PC-3 (cell line): ENCODE measurements at regions of chr19 and their contacts with region 1.

Region 1: DNA sequence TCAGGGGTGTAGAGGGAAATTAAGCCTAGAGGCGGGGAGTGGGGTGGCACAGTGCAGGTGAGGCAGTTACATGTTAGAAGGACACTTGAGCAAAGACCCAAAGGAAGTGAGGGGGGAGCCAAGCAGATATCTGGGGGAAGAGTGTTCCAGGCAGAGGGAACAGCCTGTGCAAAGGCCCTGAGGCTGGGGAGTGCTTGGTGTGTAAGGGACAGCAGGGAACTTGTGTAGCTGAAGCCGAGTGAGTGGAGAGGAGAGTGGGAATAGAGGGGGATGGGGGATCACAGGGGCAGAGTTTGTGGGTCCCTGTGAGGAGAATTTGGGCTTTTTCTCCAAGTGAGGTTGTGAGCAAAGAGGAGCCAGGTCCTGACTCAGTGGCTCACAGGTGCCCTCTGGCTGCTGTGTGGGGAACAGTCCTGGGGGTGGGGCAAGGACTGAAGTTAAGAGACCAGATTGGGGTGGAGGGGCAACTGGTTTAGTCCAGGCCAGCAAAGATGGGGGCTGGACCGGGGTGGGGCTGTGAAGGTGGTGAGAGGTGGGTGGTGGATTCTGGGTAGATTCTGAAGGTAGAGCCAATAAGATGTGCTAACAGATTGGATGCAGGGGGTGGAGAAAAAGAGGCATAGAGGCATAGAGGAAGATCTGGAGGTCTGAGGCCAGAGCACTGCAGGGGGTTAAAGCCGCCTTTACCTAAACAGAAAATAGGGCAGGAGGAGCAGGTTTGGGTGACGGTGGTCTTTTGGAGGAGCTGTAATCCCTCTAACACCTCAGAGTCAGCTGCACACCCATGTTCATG is 75.3 kb downstream of the CACNA1A start:
- DNase-seq: peak; percentile 83
- ATAC-seq: peak; percentile 72
- H3K4me3 ChIP-seq: no peak overlapping the region
- H3K27ac ChIP-seq: no peak overlapping the region
- H3K4me1 ChIP-seq: peaks cover 9% of the 10 kb centered on the region; the same call in 1 of the 2 replicates
- H3K27me3 ChIP-seq: no peaks in the 10 kb centered on the region
- CTCF ChIP-seq: peak; percentile 97

Region 2: DNA sequence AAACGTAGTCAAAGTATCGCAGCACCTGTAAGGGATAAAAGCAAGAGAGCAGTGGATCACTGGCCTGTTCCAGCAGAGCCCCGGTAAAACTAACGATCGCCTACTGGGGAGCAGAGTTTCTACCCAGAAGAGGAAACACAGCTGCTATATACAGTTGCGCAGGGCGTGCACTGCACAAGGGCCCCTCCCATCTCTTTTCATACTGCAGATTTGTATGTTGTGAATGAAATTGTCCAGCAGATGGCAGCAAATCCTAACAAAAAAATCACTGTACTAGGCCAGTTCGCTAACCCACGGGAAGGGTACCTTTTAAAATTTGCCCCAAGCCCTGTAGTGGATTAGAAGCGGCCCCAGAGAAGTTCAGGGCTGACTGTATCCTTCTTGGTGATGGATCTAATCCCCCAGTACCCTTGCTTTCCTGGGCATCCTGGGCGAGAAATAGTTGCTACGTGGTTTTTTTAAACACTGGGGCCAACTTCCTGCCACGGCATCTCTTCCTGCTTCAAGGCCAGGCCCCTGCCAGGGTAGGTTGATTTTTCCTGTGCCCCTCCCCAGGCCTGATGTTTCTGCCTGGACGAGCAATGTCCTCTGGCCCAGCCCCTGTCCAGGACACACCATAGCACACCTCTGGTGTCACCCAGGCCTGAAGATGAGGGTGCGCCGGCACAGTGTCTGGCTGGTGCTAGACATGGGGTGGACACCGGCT is 153.7 kb before region 1 on chr19:
- CTCF ChIA-PET with region 1: interaction called, 10 read pairs
- POLR2A ChIA-PET with region 1: no interaction called
- intact Hi-C with region 1: loop called (anchors 1 kb)
- DNase-seq: peak; percentile 96
- ATAC-seq: peak; percentile 97
- H3K4me3 ChIP-seq: peak overlapping the region; percentile 37; the same call in 1 of the 2 replicates
- H3K27ac ChIP-seq: no peak overlapping the region
- H3K4me1 ChIP-seq: no peaks in the 10 kb centered on the region
- H3K27me3 ChIP-seq: 0 out of 2 replicates have a peak, but pooled peaks cover 1% of the 10 kb centered on the region
- CTCF ChIP-seq: peak; percentile 86

Region 3: DNA sequence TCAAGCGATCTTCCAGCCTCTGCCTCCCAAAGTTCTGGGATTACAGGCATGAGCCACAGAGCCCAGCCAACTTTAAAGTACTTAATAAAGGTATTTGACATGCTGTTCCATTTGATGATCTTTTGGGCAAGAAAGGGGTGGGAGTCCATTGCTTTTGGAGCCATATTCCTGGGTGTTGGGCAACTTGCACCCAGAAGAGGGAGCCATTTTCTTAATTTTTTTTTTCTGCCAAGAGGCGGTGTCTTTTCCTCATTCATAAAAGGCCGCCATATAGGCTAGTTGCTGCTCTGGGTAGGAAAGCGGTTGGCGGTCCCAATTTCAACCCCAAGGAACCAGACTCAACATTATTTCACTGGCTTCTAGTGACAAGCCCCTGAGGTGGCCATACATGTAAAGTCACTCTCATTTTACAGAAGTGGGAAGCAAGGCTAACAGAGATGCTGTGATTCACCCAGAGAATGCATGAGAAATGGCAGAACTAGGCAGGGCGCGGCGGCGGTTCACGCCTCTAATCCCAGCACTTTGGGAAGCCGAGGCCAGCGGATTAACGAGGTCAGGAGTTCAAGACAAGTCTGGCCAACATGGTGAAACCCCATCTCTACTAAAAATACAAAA is 64.3 kb before region 1 on chr19:
- CTCF ChIA-PET with region 1: interaction called, 4 read pairs
- POLR2A ChIA-PET with region 1: no interaction called
- intact Hi-C with region 1: loop called (anchors 1 kb)
- DNase-seq: peak; percentile 81
- ATAC-seq: peak; percentile 56
- H3K4me3 ChIP-seq: no peak overlapping the region
- H3K27ac ChIP-seq: no peak overlapping the region
- H3K4me1 ChIP-seq: no peaks in the 10 kb centered on the region
- H3K27me3 ChIP-seq: peaks cover 10% of the 10 kb centered on the region
- CTCF ChIP-seq: peak; percentile 93

Region 4: GRCh38 chr19:13398780-13399726 is 31.9 kb before region 1 on chr19:
- CTCF ChIA-PET with region 1: interaction called, 17 read pairs
- POLR2A ChIA-PET with region 1: no interaction called
- intact Hi-C with region 1: loop called (anchors 2 kb)
- DNase-seq: peak; percentile 99
- ATAC-seq: peak; percentile 94
- H3K4me3 ChIP-seq: peak overlapping the region; percentile 40; the same call in 1 of the 2 replicates
- H3K27ac ChIP-seq: peak overlapping the region; percentile 94
- H3K4me1 ChIP-seq: peaks cover 37% of the 10 kb centered on the region
- H3K27me3 ChIP-seq: no peaks in the 10 kb centered on the region
- CTCF ChIP-seq: no peak

Region 5: GRCh38 chr19:13476071-13476470 is 45.1 kb after region 1 on chr19:
- CTCF ChIA-PET with region 1: no interaction called
- POLR2A ChIA-PET with region 1: no interaction called
- intact Hi-C with region 1: no loop called
- DNase-seq: no peak
- ATAC-seq: no peak
- H3K4me3 ChIP-seq: no peak overlapping the region
- H3K27ac ChIP-seq: no peak overlapping the region
- H3K4me1 ChIP-seq: no peaks in the 10 kb centered on the region
- H3K27me3 ChIP-seq: peaks cover 86% of the 10 kb centered on the region
- CTCF ChIP-seq: no peak

Region 6: GRCh38 chr19:13588957-13589833 is 158.2 kb after region 1 on chr19:
- CTCF ChIA-PET with region 1: no interaction called
- POLR2A ChIA-PET with region 1: no interaction called
- intact Hi-C with region 1: loop called (anchors 10 kb)
- DNase-seq: peak; percentile 84
- ATAC-seq: peak; percentile 98
- H3K4me3 ChIP-seq: peak overlapping the region; percentile 51; the same call in 1 of the 2 replicates
- H3K27ac ChIP-seq: no peak overlapping the region
- H3K4me1 ChIP-seq: no peaks in the 10 kb centered on the region
- H3K27me3 ChIP-seq: no peaks in the 10 kb centered on the region
- CTCF ChIP-seq: peak; percentile 99